MCF 10A (cell line): ENCODE measurements at regions of chrX and their contacts with region 1.

Region 1: DNA sequence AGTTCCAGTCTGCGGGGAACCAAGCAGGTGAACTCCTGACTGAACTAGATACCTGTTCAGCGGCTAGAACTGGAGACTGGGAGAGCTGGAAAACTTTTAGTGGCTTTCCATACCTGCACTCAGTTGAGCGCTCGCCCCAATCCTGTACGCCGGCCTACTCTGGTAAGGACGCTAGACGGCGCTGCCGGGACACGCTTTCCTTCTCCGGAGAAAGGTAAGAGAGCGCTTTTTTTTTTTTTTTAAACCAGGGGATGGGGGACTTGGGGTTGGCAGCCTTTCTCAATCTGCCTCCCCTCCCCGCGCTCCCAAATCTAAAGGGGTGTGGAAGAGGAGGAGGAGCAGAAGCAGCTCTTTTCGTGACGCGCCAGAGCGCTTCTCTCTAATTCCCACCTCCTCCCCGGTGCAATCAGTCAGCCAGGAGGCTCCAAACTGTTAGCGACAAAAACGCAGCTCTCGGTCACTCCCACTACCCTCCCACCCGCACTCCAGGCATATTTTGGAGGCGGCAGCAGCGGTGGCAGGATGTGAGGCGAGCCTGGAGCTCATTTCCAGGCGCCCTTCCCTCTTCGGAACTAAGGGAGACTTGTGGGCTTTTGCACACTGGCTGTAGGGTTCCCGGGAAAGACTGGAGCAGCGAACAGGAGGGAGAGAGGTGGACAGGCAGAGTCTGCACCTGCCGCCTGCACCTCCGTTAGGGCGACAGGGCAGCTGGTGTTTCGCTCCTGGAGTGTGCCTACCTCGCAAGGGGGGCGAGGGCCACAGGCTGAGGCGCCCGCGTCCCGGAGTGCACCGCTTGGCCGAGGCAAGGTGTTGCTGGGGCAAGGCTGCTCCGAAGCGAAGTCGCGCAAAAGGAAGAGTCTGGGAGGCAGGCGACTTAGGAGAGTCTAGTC is at the start of gene IL1RAPL2:
- DNase-seq: peak; percentile 57
- H3K4me3 Mint-ChIP-seq: peak within 1 kb of the TSS; percentile 74
- H3K27ac Mint-ChIP-seq: no peak within 1 kb of the TSS
- H3K4me1 Mint-ChIP-seq: no peaks in the 10 kb centered on the region
- H3K27me3 Mint-ChIP-seq: peaks cover 36% of the 10 kb centered on the region
- CTCF ChIP-seq: peak; percentile 57
- total RNA-seq, gene IL1RAPL2: 3.2 and 4.4 TPM in 2 replicates

Region 2: DNA sequence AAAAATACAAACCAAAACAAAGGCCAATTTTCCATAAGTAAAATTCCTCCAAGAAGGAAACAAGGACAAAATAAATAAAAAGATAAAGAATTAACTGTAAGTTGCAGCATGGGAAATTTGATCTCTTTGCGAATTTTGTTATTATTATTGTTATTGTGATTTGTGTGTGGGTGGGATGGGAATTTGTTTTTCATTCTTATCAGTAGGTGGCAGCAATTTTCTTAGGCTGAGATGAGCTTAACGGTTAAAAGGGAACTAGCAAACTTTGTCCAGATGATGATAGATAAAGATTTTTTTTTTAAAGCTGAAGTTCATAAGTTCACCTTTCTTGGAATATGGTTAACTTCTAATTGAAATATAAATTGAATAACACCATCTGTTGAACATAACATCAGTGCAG is 83.3 kb before region 1 on chrX:
- CTCF ChIA-PET with region 1: interaction called, 13 read pairs
- POLR2A ChIA-PET with region 1: no interaction called
- intact Hi-C with region 1: no loop called
- DNase-seq: peak; percentile 13
- H3K4me3 Mint-ChIP-seq: no peak overlapping the region
- H3K27ac Mint-ChIP-seq: no peak overlapping the region
- H3K4me1 Mint-ChIP-seq: no peaks in the 10 kb centered on the region
- H3K27me3 Mint-ChIP-seq: peaks cover 44% of the 10 kb centered on the region
- CTCF ChIP-seq: peak; percentile 17